ENCODE measurements at regions of chr12 and their contacts with region 1.

Region 1: GRCh38 chr12:82527165-82527780 is 159.4 kb upstream of the TMTC2 start:
- DNase-seq: peak; percentile 34
- CTCF ChIP-seq: peak; percentile 91

Region 2: GRCh38 chr12:82238517-82238916 is 288.8 kb before region 1 on chr12:
- in situ Hi-C with region 1: no loop called
- DNase-seq: no peak
- CTCF ChIP-seq: no peak

Region 3: GRCh38 chr12:82627569-82628198 is 100.4 kb after region 1 on chr12:
- in situ Hi-C with region 1: loop called (anchors 10 kb)
- DNase-seq: peak; percentile 25
- CTCF ChIP-seq: peak; percentile 56